ENCODE measurements at regions of chr7 and their contacts with region 1.

Region 1: DNA sequence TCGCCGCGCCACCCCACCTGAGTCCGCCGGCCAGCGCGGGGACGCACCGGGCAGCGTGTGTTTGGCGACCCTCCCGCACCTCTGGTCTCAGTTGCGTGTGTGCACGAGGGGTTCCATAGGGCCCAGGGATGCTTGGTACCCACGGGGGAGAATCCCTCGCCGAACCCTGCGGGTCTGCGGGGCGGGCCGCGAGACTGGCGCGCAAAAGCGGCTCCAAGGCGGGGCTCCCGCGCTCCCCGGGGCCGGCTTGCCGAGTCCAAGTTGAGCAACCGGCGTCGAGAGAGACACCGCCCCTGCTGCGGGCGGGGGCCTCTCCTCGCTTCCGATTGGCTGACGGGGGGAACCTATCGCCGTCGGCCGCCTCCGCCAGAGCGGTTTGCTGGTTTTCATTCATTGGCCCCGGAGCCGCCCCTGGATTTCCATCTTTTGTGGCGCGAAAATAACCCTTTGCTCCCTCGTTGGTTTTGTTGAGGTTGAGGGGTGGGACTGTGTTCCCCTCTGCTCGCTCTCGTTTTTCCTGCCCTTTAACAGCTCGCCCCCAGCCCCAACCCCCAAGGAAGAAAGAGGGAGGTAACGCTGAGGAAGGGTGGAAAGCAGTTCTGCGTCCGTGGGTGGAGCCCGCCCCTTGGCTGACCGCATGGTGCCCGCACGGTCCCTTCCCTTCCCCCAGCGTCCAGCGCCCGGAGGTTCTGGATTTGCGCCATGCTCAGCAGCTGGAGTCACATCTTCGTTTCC is 4.0 kb upstream of the IGF2BP3 start:
- DNase-seq: peak; percentile 88
- H3K4me3 Mint-ChIP-seq: peak overlapping the region; percentile 64
- H3K27ac Mint-ChIP-seq: no peak overlapping the region
- H3K4me1 Mint-ChIP-seq: peaks cover 6% of the 10 kb centered on the region
- H3K27me3 Mint-ChIP-seq: peaks cover 64% of the 10 kb centered on the region
- CTCF ChIP-seq: no peak

Region 2: DNA sequence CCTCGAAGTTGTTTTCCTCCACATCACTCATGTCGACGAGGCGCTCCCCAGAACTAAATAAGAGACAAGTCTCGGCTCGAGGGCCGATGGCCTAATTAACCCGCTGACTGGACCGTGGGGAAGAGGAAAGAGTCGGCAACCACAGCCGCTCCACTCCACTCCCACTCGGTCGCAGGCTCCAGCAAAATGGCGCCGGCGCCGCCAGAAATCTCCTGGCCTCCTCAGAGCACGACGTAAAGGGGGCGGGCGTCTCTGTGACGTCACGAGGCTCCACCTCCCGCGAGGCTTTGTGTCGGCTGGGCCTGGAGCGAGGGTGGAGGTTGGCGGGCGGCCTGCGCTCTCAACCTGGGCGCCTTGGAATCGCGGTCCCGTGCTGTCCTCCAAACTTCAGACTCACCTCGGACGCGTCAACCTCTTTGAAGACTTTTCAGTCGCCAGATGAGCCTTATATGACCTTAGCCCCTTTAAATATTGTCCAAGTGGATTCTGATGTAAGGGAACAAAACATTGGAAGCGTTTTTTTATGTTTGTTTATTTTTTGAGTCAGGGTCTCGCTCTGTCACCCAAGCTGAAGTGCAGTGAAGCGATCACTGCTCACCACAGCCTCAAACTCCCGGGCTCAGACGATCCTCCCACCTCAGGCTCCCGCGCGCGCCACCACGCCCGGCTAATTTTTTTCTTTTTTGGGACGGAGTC is 57.7 kb after region 1 on chr7 and contains the start of gene TRA2A:
- CTCF ChIA-PET with region 1: no interaction called
- POLR2A ChIA-PET with region 1: interaction called, 14 read pairs
- intact Hi-C with region 1: loop called (anchors 2 kb)
- DNase-seq: peak; percentile 96
- H3K4me3 Mint-ChIP-seq: peak within 1 kb of the TSS; percentile 95
- H3K27ac Mint-ChIP-seq: peak within 1 kb of the TSS; percentile 100
- H3K4me1 Mint-ChIP-seq: peaks cover 17% of the 10 kb centered on the region
- H3K27me3 Mint-ChIP-seq: no peaks in the 10 kb centered on the region
- CTCF ChIP-seq: no peak
- total RNA-seq, gene TRA2A: 92.9 and 113 TPM in 2 replicates

Measured in MCF 10A (cell line).